CD4-positive, alpha-beta memory T cell (primary cell): ENCODE measurements at regions of chr21 and their contacts with region 1.

Region 1: GRCh38 chr21:42496122-42496900 is at the start of gene RSPH1:
- DNase-seq: peak; percentile 99
- H3K4me3 ChIP-seq: peak within 1 kb of the TSS; percentile 60 to 71
- H3K4me3 Mint-ChIP-seq: peak within 1 kb of the TSS; percentile 86 to 96 (median 92)
- H3K27ac ChIP-seq: peak within 1 kb of the TSS; percentile 79
- H3K27ac Mint-ChIP-seq: peak within 1 kb of the TSS; percentile 82 to 97 (median 94)
- H3K4me1 ChIP-seq: peaks cover 15% of the 10 kb centered on the region
- H3K4me1 Mint-ChIP-seq: peaks cover 8 to 20% (median 15%) of the 10 kb centered on the region in 4 donors
- H3K27me3 ChIP-seq: no peaks in the 10 kb centered on the region
- H3K27me3 Mint-ChIP-seq: peaks cover 2 to 6% of the 10 kb centered on the region in 2 donors
- total RNA-seq, gene RSPH1: not detected

Region 2: DNA sequence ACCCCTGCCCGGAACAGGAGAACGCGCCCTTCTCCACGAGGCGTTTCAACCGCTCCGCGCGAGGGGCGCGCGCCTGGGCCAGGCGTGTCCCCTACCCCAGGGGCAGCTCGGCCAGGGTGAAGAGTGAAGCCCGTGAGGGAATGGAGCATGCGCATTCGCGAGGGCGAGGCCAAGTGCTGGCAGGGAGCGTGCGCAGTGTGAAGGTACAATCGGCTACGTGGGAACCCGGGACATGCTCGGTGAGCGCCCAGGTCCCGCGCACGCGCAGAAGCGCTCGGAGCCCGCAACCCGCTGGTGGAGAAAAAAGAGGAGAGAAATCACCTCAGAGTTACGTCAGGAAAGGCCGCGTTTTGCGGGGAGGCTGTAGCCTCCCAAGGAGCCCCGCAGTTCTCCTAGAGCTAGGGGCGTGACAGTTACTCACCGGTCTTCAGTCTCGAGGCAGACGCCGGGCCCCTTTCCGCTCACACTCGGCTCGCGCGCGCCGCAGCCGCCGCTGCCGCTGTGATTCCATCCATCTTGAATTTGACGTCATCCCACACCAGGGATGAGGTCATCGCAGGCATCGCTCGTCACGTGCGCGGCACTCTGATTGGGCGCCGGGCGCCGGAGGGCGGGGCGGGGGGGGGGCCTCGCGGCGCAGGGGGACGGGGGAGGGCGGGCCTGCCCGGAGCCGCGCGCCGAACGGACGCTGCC is 486.3 kb before region 1 on chr21 and contains the start of gene ZBTB21:
- CTCF ChIA-PET with region 1: no interaction called
- POLR2A ChIA-PET with region 1: no interaction called
- intact Hi-C with region 1: loop called (anchors 1 kb)
- DNase-seq: peak; percentile 98
- H3K4me3 ChIP-seq: peak within 1 kb of the TSS; percentile 37 to 83
- H3K4me3 Mint-ChIP-seq: peak within 1 kb of the TSS; percentile 96 to 100 (median 98)
- H3K27ac ChIP-seq: peak within 1 kb of the TSS; percentile 91
- H3K27ac Mint-ChIP-seq: peak within 1 kb of the TSS; percentile 100
- H3K4me1 ChIP-seq: peaks cover 19% of the 10 kb centered on the region
- H3K4me1 Mint-ChIP-seq: peaks cover 18 to 52% (median 27%) of the 10 kb centered on the region in 4 donors
- H3K27me3 ChIP-seq: no peaks in the 10 kb centered on the region
- H3K27me3 Mint-ChIP-seq: peaks cover 1 to 5% of the 10 kb centered on the region in 2 donors
- total RNA-seq, gene ZBTB21: 20.4 to 21.7 TPM

Region 3: GRCh38 chr21:42463861-42464520 is 32.3 kb before region 1 on chr21:
- CTCF ChIA-PET with region 1: no interaction called
- POLR2A ChIA-PET with region 1: no interaction called
- intact Hi-C with region 1: loop called (anchors 5 kb)
- DNase-seq: peak; percentile 69 to 87 (median 77)
- H3K4me3 ChIP-seq: no peak overlapping the region
- H3K4me3 Mint-ChIP-seq: peak overlapping the region in 7 of 8 donors; percentile 18 to 88 (median 73)
- H3K27ac ChIP-seq: peak overlapping the region; percentile 22
- H3K27ac Mint-ChIP-seq: peak overlapping the region; percentile 58 to 98 (median 91)
- H3K4me1 ChIP-seq: peaks cover 48% of the 10 kb centered on the region
- H3K4me1 Mint-ChIP-seq: peaks cover 37 to 75% (median 48%) of the 10 kb centered on the region in 4 donors
- H3K27me3 ChIP-seq: no peaks in the 10 kb centered on the region
- H3K27me3 Mint-ChIP-seq: no peaks in the 10 kb centered on the region

Region 4: GRCh38 chr21:42513985-42514882 is 17.9 kb after region 1 on chr21:
- CTCF ChIA-PET with region 1: no interaction called
- POLR2A ChIA-PET with region 1: interaction called, 6 read pairs
- intact Hi-C with region 1: loop called (anchors 1 kb)
- DNase-seq: peak; percentile 50 to 64 (median 59)
- H3K4me3 ChIP-seq: peak overlapping the region; percentile 57 to 79
- H3K4me3 Mint-ChIP-seq: peak overlapping the region; percentile 90 to 92 (median 90)
- H3K27ac ChIP-seq: peak overlapping the region; percentile 65
- H3K27ac Mint-ChIP-seq: peak overlapping the region; percentile 78 to 94 (median 90)
- H3K4me1 ChIP-seq: peaks cover 29% of the 10 kb centered on the region
- H3K4me1 Mint-ChIP-seq: peaks cover 18 to 50% (median 31%) of the 10 kb centered on the region in 4 donors
- H3K27me3 ChIP-seq: no peaks in the 10 kb centered on the region
- H3K27me3 Mint-ChIP-seq: no peaks in the 10 kb centered on the region

Region 5: GRCh38 chr21:42525152-42525581 is 28.9 kb after region 1 on chr21:
- CTCF ChIA-PET with region 1: no interaction called
- POLR2A ChIA-PET with region 1: interaction called, 8 read pairs
- intact Hi-C with region 1: loop called (anchors 1 kb)
- DNase-seq: no peak
- H3K4me3 ChIP-seq: no peak overlapping the region
- H3K4me3 Mint-ChIP-seq: peak overlapping the region in 2 of 8 donors; percentile 38 to 43
- H3K27ac ChIP-seq: no peak overlapping the region
- H3K27ac Mint-ChIP-seq: peak overlapping the region in 6 of 7 donors; percentile 38 to 85 (median 68)
- H3K4me1 ChIP-seq: peaks cover 32% of the 10 kb centered on the region
- H3K4me1 Mint-ChIP-seq: peaks cover 18 to 48% (median 35%) of the 10 kb centered on the region in 4 donors
- H3K27me3 ChIP-seq: no peaks in the 10 kb centered on the region
- H3K27me3 Mint-ChIP-seq: no peaks in the 10 kb centered on the region

Region 6: DNA sequence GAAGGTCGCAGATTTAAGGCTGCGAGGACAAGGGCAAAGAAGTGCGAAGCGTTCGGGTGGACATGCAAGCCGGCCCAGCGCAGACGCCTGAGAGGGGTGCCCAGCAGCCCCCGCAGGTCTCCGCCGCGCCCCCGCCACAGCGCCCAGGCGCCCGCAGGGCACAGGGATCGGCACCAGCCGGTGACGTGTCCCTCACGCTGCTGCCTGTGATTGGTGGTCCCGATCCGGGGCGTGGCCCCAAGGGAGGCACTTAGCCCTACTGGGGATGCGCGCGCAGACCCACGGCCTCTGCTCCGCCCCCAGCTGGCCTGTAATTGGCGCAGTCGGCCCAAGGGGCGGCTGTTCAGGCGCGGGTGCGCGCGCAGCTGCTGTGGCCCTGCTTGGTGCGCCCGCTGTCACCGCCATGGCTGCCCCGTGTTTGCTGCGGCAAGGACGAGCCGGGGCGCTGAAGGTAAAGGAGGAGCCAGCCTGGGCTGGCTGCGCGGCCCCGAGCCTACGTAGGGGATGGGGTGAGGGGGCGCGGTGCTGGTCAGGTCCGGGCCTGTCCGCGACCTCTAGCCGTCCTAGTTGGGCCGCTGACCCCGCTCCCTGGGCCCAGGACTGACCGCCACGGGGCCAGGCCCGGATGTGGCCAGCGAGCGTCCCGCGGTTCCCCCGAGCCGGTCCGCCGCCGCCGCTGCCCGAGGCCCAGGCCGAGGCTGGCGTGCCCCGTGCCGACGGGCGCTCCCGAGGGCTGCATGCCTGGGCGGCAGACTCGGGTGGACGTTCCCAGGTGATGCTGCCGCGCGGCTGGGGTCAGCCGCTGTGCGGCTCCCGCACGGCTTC is 396.8 kb after region 1 on chr21 and contains the start of gene NDUFV3:
- CTCF ChIA-PET with region 1: no interaction called
- POLR2A ChIA-PET with region 1: interaction called, 3 read pairs
- intact Hi-C with region 1: loop called (anchors 10 kb)
- DNase-seq: peak; percentile 97 to 100 (median 98)
- H3K4me3 ChIP-seq: peak within 1 kb of the TSS; percentile 69 to 79
- H3K4me3 Mint-ChIP-seq: peak within 1 kb of the TSS; percentile 87 to 94 (median 91)
- H3K27ac ChIP-seq: peak within 1 kb of the TSS; percentile 95
- H3K27ac Mint-ChIP-seq: peak within 1 kb of the TSS; percentile 90 to 99 (median 97)
- H3K4me1 ChIP-seq: peaks cover 15% of the 10 kb centered on the region
- H3K4me1 Mint-ChIP-seq: peaks cover 9 to 26% (median 13%) of the 10 kb centered on the region in 4 donors
- H3K27me3 ChIP-seq: no peaks in the 10 kb centered on the region
- H3K27me3 Mint-ChIP-seq: no peaks in the 10 kb centered on the region
- total RNA-seq, gene NDUFV3: 28.1 to 33.2 TPM

Region 7: GRCh38 chr21:42973991-42974831 is 477.9 kb after region 1 on chr21 and contains the start of gene PKNOX1:
- CTCF ChIA-PET with region 1: no interaction called
- POLR2A ChIA-PET with region 1: no interaction called
- intact Hi-C with region 1: loop called (anchors 1 kb)
- DNase-seq: peak; percentile 99 to 100 (median 99)
- H3K4me3 ChIP-seq: peak within 1 kb of the TSS; percentile 70 to 94
- H3K4me3 Mint-ChIP-seq: peak within 1 kb of the TSS; percentile 84 to 95 (median 90)
- H3K27ac ChIP-seq: peak within 1 kb of the TSS; percentile 91
- H3K27ac Mint-ChIP-seq: peak within 1 kb of the TSS; percentile 91 to 98 (median 93)
- H3K4me1 ChIP-seq: peaks cover 25% of the 10 kb centered on the region
- H3K4me1 Mint-ChIP-seq: peaks cover 16 to 42% (median 30%) of the 10 kb centered on the region in 4 donors
- H3K27me3 ChIP-seq: no peaks in the 10 kb centered on the region
- H3K27me3 Mint-ChIP-seq: no peaks in the 10 kb centered on the region
- total RNA-seq, gene PKNOX1: 21.5 to 24.8 TPM